Posterior vena cava (tissue), 2 donors: ENCODE measurements at regions of chr3 and their contacts with region 1.

Region 1: GRCh38 chr3:46976326-46977190 is at the start of gene CCDC12:
- DNase-seq: peak; percentile 97
- total RNA-seq, gene CCDC12: 21.5 to 26.0 TPM

Region 2: DNA sequence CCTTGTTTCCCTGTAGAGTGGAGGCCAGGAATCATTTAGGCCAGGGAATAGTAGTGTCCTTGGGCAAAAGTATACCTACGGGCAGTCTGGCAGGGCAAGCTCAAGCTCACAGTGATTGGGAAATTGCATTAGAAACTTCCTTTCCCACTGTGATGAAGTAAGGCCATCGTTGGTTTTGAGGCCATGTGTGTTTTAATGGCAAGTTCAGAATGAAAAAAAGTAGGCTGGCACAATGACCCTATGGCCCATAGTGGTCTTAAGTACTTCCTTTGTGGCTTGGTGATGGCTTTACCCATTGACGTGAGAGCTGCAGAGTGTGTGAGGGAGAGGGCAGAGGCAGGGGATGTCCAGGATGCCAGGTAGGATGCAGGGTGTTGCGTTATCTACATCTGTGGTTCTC is 1353.2 kb before region 1 on chr3:
- intact Hi-C with region 1: no loop called
- DNase-seq: no peak

Region 3: DNA sequence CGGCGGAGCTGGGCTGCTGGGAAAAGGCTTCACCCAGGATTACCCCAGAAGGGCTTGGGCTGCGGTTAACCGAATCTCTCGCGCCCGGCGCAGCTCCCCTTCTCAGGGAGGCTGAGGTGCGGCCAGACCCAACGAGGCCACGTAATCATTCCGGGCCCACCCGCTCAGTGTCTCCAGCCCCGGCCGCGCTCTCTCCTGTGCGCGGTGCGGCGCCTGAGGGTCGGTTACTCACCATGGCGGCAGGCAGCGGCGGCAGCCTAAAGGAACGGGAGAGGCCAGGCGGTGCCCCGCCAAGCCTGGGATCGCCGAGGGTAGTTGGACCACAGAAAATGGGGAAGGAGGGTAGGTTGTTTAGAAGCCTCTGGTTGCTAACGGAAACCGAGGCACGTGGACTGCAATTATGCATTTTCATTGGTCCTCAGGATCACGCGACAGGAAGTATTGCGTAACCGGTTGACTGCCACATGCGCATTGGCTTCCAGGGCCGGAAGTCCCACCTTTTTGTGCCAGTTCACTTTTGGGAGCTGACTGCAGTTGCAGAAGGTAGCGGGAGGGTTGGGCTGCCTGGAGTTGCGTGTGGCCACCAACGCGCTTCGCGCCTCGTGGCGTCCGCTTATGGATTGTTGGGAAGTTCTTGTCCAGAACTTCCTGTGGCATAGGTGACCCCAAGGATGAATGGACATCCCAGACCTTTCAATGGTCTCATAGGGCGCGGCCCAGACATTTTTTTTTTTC is 1134.6 kb before region 1 on chr3 and contains the start of gene LZTFL1:
- intact Hi-C with region 1: loop called in 1 of 2 experiments (anchors 5 kb)
- DNase-seq: peak; percentile 96
- total RNA-seq, gene LZTFL1: 12.7 TPM

Region 4: DNA sequence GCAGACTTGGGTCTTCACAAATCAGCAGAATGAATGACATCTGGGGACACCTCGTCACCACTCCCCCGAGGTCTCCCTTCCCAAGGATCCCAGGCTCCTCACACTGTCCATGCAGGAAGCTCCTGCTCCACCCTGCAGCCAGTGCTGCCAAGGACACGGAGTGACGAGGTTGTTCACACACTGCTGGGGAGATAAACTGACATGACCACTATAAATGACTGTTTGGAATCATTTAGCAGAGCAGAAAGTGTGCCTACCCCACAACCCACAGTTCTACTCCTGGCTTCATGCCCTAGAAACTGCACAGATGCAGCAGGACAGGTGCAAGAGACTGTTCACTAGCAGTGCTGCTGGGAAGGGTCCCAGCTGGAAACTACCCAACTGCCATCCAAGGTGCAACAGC is 239.2 kb before region 1 on chr3:
- intact Hi-C with region 1: no loop called
- DNase-seq: peak; percentile 59

Region 5: GRCh38 chr3:47024932-47025331 is 48.4 kb after region 1 on chr3:
- intact Hi-C with region 1: loop called in 1 of 2 experiments (anchors 1 kb)
- DNase-seq: no peak

Region 6: DNA sequence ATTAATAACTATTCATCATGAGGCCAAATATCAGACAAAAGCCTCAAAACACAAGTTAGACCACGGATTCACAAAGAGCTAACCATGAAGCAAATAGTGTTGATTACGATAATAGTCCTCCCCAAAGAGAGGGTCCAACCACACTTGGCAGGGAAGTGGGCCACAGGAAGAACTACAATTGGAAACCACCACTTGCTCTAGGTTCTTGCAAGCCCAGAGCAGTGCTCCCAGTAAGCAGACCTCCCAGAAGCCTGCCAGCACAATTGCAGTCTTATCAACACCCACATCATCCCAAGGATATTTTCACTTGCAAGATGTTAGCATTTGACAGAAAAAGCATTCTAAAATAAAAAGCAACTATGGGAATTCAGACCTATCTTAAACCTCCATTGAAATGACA is 176.0 kb after region 1 on chr3:
- intact Hi-C with region 1: no loop called
- DNase-seq: no peak